ENCODE measurements at regions of chr3 and their contacts with region 1.

Region 1: DNA sequence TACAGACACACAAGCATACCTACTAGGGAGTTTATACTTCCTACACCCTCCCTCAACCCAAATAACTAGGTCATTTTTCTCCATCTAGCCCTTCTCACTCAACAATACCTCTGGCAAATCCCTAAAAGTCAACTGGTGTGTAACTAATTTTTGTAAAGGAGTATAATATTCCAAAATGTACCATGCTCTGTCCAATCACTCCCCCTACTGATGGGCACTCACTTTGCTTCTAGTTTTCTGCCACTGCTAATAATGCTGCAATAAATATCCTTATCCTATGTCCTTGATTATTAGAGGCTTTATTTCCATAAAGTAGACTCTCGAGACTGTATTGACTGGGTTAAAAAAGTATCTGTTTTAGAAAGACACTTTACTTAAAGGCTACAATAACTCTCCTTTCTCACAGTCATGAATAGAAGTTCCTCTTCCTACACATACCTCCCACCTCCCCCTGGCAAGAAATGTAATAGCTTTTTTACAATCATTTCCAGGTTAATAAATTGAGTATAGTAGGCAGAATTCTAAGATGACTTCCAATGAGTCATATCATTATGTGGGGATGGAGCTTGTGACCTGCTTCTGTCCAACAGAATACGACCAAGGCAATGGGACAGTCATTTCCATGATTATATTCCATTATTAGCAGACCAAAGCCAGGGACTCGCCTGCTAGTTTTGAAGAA is 30.0 kb downstream of the SHQ1 start:
- DNase-seq: no peak
- H3K4me3 Mint-ChIP-seq: no peak overlapping the region
- H3K27ac Mint-ChIP-seq: no peak overlapping the region
- H3K4me1 Mint-ChIP-seq: peaks cover 36% of the 10 kb centered on the region
- H3K27me3 Mint-ChIP-seq: no peaks in the 10 kb centered on the region

Region 2: GRCh38 chr3:71926262-71926600 is 892.0 kb before region 1 on chr3:
- intact Hi-C with region 1: loop called (anchors 1 kb)
- DNase-seq: no peak
- H3K4me3 Mint-ChIP-seq: no peak overlapping the region
- H3K27ac Mint-ChIP-seq: no peak overlapping the region
- H3K4me1 Mint-ChIP-seq: peaks cover 12% of the 10 kb centered on the region
- H3K27me3 Mint-ChIP-seq: no peaks in the 10 kb centered on the region

Region 3: DNA sequence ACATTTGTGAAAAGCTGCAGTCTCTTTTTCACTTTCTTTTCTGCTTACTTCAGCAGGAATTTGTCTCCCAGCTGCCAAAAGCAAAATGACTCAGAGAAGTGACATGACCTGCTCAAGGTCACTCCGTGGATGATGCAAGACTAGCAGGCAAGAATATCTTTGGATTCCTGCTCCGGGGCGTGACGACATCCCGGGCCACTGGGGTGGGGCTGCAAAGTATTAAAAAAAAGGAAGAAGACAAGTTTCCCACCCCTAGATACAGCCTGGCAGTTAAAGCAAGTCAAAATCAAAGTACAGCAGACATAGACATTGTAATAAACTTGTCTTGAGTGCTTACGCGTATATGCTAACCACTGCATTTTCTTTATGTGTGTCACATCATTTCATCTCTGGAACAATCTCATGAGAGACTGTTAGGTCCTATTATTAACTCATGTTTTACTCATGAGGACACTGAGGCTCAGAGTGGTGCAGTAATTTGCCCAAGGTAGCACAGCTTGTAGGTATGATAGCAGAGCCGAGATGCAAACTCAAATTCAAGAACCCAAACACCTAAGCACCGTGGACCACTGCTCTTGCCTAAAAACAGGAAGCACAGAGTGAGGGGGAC is 548.1 kb before region 1 on chr3:
- intact Hi-C with region 1: loop called (anchors 2 kb)
- DNase-seq: no peak
- H3K4me3 Mint-ChIP-seq: no peak overlapping the region
- H3K27ac Mint-ChIP-seq: peak overlapping the region; percentile 74
- H3K4me1 Mint-ChIP-seq: peaks cover 70% of the 10 kb centered on the region
- H3K27me3 Mint-ChIP-seq: no peaks in the 10 kb centered on the region

Region 4: GRCh38 chr3:72447059-72447946 is 370.9 kb before region 1 on chr3:
- intact Hi-C with region 1: loop called (anchors 1 kb)
- DNase-seq: peak; percentile 93
- H3K4me3 Mint-ChIP-seq: peak overlapping the region; percentile 71
- H3K27ac Mint-ChIP-seq: peak overlapping the region; percentile 80
- H3K4me1 Mint-ChIP-seq: peaks cover 50% of the 10 kb centered on the region
- H3K27me3 Mint-ChIP-seq: peaks cover 1% of the 10 kb centered on the region

Region 5: DNA sequence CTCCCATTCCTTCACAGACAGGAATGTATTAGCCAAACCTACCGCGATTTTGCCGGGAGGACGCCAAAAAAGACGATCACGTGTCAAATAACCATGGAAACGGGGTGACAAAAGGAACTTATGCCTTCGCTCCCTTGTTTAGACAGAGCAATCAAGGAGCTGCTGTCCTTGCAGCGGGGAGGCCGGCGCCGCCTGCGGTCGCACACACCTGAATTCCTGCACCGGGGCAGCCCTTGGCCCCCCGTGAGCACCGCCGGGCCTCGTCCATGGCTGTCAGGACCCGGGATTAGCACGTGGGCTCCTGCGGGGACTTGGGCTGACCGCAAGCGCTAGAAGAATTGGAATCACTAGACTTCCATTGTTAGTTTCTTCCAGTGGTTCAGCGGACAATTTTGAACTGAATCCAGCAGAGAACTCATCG is 163.1 kb before region 1 on chr3:
- intact Hi-C with region 1: no loop called
- DNase-seq: no peak
- H3K4me3 Mint-ChIP-seq: no peak overlapping the region
- H3K27ac Mint-ChIP-seq: no peak overlapping the region
- H3K4me1 Mint-ChIP-seq: peaks cover 13% of the 10 kb centered on the region
- H3K27me3 Mint-ChIP-seq: peaks cover 4% of the 10 kb centered on the region

Region 6: DNA sequence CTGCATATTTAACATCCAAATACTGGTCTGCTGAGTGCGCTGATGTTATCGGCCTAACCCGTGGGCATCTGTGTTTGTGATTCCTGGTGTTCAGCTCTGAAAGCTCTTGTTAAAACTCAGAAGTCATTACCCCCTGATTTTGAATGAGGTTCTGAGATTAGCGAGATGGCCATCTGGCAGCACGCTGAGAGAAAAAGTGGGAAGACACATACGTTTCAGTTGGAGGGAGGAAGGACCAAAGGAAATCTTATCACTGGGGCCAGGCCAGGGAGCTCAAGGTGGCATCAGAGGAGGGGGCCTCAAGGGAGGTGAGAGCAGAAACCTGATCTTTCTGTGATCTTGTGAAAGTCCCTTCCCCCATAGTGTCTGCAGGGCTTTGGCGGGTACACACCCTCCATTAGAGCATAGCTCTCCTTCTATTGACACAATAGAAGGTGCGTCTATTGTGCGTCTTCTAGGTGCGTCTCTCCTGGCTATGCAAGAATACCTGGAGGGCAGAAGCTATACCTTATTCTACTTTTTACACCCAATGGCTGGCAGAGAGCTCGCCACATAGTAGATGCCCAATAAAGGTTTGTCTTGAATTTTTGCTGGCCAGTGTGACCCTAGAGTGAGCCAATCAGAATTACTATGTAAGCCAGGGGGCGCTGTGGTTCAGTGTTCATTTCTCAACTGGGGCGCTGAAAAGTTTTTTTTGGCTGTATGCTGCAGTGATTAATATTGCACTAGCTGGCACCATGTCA is 152.4 kb before region 1 on chr3:
- intact Hi-C with region 1: loop called (anchors 1 kb)
- DNase-seq: peak; percentile 18
- H3K4me3 Mint-ChIP-seq: no peak overlapping the region
- H3K27ac Mint-ChIP-seq: no peak overlapping the region
- H3K4me1 Mint-ChIP-seq: peaks cover 5% of the 10 kb centered on the region
- H3K27me3 Mint-ChIP-seq: peaks cover 2% of the 10 kb centered on the region

Region 7: DNA sequence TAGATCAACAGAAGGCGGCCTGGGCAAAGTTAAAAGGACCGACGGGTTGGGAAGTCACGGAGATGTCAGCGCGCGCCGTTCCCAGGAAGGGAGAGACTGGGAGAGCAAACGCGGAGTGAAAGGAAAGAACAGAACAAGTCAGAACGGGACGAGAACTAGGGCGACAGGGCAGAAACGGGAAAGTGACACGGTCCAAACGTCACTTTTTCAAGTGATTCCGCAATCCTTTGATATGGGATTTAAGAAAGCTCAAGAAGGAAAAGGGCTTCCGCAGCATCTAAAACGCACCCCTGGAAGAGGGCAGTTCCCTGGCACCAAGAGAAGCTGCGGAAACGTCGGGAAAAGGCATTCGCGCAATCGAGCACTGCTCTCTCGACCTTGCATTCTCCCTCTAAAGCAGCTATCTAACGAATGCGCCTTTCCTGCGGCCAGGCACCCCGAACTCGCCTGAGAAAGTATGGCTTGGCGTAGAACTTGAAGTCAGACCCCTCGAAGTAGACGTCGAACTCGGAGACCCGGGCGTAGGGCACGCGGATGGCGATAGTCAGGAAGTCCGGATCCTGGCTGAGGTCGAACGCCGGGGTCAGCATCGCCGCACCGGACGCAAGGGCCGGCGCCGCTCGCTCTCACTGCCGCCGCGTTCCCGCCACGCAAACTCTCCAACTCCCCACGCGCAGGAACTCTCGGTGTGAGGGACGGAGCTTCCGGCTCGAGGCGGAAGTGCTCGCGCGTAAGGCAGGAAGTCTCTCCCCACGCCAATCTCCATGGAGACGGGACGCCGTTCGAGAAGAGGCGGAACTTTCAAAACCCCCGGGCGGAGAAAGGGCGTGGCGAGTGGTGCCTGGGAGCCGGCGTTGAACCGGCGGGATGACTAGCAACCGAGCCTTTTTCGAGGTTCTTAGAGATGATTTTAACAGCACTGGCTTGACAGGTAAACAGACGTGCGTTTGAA is 29.8 kb after region 1 on chr3 and contains the start of gene SHQ1:
- intact Hi-C with region 1: loop called (anchors 2 kb)
- DNase-seq: peak; percentile 92
- H3K4me3 Mint-ChIP-seq: peak within 1 kb of the TSS; percentile 99
- H3K27ac Mint-ChIP-seq: peak within 1 kb of the TSS; percentile 88
- H3K4me1 Mint-ChIP-seq: peaks cover 62% of the 10 kb centered on the region
- H3K27me3 Mint-ChIP-seq: peaks cover 9% of the 10 kb centered on the region
- total RNA-seq, gene SHQ1: 46.1 and 48.5 TPM in 2 replicates

Region 8: DNA sequence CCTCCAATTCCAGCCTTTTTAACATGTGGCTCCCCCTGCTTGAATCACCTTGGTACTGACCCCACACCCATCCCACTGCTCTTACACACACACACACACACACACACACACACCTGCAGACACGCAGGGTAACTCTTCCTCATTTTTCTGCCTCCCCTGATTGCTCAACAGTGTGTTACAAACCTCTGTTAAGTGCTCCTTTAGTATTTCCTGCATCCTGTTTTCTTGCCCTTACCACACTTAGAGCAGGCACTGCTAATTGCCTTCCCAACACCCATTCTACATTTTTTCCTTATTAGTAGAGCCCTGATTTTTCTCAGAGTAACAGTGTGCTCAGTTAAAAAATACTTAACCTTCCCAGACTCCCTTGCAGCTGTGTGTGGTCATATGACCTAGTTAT is 427.2 kb after region 1 on chr3:
- intact Hi-C with region 1: no loop called
- DNase-seq: no peak
- H3K4me3 Mint-ChIP-seq: no peak overlapping the region
- H3K27ac Mint-ChIP-seq: no peak overlapping the region
- H3K4me1 Mint-ChIP-seq: no peaks in the 10 kb centered on the region
- H3K27me3 Mint-ChIP-seq: no peaks in the 10 kb centered on the region

Measured in activated T-helper 1 cell treated with anti-CD3 and anti-CD28 coated beads, Interleukin-12 subunit alpha, Interleukin-12 subunit beta, Interleukin-2, Interleukin-4 antibody, amounts not matched to agents 30 ng/mL and 10 ng/mL and 1 ng/mL, durations not matched to agents 14 hours and 24 hours and 36 hours (primary cell).